GM12878 (cell line): ENCODE measurements at regions of chr5 and their contacts with region 1.

Region 1: DNA sequence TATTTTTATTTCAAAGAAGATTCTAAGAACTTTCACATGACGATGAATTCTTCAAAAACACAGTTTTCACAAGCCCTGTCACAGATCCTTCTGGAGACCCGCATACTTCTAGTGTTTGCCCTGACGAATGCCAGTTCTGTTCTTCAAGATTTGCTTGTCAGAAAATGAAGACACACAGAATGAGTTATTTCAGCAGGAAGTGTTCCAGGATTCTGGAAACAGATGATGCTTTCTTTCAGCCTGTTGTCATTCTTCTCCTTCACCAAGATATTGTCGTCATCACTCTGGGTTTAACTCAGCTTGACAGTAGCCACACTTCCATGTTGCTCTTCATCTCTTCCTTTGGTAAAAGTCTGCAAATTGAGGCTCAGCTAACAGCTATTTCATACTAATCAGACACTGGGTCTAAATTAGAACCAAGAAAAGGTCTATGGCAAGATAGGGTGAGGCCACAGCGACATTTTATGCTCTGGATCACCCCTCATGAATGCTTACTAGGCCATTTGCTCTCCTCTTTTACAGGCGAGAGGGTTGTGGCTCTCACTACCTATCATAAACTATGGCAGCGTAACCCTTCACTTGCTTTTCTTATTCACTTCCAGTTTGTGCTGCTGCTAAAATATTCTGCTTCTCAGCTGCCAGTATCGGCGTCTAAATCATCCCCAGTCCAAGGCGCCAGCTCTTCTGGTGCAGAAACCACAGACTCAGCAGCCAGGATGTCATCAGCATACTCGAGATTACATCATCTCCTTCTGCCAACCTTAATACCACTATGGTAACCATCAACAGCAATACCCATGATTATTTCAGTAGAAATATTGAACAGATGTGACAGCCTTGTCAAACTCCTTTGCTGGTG is 159.6 kb upstream of the TBCA start:
- DNase-seq: peak; percentile 44
- ATAC-seq: peak; percentile 86
- H3K4me3 ChIP-seq: no peak overlapping the region
- H3K27ac ChIP-seq: peak overlapping the region; percentile 86
- H3K4me1 ChIP-seq: peaks cover 28% of the 10 kb centered on the region
- H3K27me3 ChIP-seq: no peaks in the 10 kb centered on the region
- CTCF ChIP-seq: no peak
- EP300 ChIP-seq: no peak
- POLR2A ChIP-seq: no peak
- RAD21 ChIP-seq: no peak

Region 2: DNA sequence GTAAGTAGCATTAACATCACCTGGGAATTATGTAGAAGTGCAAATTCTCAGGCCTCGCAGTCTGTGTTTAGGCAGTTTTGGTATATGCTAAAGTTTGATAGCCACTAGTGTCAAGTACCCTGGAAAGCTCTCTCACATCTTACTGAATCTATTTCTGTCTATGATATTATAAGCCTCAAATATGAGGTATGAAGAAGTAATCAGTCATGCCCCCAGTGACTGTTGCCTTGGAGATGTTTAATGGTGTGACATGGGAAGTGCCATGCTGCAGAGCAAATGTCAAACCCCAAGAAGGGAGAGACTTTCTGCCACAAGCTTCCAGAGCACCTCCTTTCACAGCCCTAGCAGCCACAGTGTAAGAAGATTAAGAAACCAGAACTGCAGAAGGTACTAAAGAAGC is 735.1 kb before region 1 on chr5:
- CTCF ChIA-PET with region 1: no interaction called
- POLR2A ChIA-PET with region 1: no interaction called
- RAD21 ChIA-PET with region 1: no interaction called
- SMC1A ChIA-PET with region 1: no interaction called
- in situ Hi-C with region 1: no loop called
- intact Hi-C with region 1: no loop called
- DNase-seq: no peak
- ATAC-seq: no peak
- H3K4me3 ChIP-seq: no peak overlapping the region
- H3K27ac ChIP-seq: no peak overlapping the region
- H3K4me1 ChIP-seq: no peaks in the 10 kb centered on the region
- H3K27me3 ChIP-seq: no peaks in the 10 kb centered on the region
- CTCF ChIP-seq: no peak
- EP300 ChIP-seq: no peak
- POLR2A ChIP-seq: no peak
- RAD21 ChIP-seq: no peak

Region 3: DNA sequence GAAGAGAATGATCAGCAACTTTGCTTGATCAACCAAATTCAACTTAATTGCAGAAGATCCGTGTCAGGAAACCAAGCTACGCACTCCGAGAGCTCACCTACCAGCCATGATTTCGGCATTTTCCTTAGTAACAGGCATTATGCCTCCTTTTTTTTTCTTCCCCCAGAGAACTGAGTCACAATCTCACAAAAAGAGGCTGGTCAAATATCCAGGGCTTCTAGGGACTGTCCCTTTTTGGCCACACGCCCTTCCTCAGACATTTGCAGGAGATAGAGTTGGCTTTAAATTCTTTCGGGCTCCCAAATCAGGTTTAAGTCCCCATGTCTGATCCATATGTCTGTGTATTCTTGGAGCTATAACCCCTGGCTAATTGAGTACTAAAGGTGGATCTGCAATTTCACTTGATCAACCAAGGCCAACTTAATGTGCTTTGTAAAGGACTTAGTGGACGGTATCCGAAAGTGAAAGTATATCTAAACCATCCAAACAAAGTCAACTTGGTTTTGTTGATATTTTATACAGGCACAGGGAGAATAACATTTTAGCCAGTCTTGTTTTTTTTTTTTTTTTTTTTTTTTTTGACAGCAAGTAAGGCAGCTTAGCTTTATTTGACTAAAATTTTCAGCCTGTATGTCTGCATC is 58.8 kb before region 1 on chr5:
- CTCF ChIA-PET with region 1: interaction called, 5 read pairs
- POLR2A ChIA-PET with region 1: interaction called, 12 read pairs
- RAD21 ChIA-PET with region 1: interaction called, 68 read pairs
- SMC1A ChIA-PET with region 1: interaction called, 81 read pairs
- in situ Hi-C with region 1: no loop called
- intact Hi-C with region 1: loop called (anchors 2 kb)
- DNase-seq: no peak
- ATAC-seq: no peak
- H3K4me3 ChIP-seq: no peak overlapping the region
- H3K27ac ChIP-seq: no peak overlapping the region
- H3K4me1 ChIP-seq: peaks cover 23% of the 10 kb centered on the region
- H3K27me3 ChIP-seq: no peaks in the 10 kb centered on the region
- CTCF ChIP-seq: no peak
- EP300 ChIP-seq: no peak
- POLR2A ChIP-seq: no peak
- RAD21 ChIP-seq: no peak

Region 4: DNA sequence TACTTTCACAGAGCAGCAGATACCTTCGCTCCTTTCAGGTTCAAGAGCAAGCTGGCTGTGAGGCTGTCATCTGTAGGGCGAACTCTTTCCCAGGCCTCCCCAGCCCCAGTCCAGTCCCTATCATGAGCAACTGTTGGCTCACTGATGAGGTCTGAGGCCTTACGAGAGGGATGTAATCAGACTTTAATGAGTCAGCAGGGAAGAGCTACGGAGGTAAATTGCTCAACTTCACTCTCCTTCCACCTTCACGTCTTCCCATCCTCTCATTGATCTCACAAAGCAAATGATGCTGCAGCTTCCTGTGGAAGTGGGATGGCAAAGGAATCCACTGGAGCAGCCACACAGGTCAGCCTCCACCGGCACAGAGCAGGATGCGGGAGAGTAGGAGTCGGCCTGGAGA is 28.9 kb before region 1 on chr5:
- CTCF ChIA-PET with region 1: interaction called, 3 read pairs
- POLR2A ChIA-PET with region 1: no interaction called
- RAD21 ChIA-PET with region 1: interaction called, 3 read pairs
- SMC1A ChIA-PET with region 1: interaction called, 12 read pairs
- in situ Hi-C with region 1: no loop called
- intact Hi-C with region 1: no loop called
- DNase-seq: no peak
- ATAC-seq: no peak
- H3K4me3 ChIP-seq: no peak overlapping the region
- H3K27ac ChIP-seq: no peak overlapping the region
- H3K4me1 ChIP-seq: no peaks in the 10 kb centered on the region
- H3K27me3 ChIP-seq: no peaks in the 10 kb centered on the region
- CTCF ChIP-seq: no peak
- EP300 ChIP-seq: no peak
- POLR2A ChIP-seq: no peak
- RAD21 ChIP-seq: no peak

Region 5: DNA sequence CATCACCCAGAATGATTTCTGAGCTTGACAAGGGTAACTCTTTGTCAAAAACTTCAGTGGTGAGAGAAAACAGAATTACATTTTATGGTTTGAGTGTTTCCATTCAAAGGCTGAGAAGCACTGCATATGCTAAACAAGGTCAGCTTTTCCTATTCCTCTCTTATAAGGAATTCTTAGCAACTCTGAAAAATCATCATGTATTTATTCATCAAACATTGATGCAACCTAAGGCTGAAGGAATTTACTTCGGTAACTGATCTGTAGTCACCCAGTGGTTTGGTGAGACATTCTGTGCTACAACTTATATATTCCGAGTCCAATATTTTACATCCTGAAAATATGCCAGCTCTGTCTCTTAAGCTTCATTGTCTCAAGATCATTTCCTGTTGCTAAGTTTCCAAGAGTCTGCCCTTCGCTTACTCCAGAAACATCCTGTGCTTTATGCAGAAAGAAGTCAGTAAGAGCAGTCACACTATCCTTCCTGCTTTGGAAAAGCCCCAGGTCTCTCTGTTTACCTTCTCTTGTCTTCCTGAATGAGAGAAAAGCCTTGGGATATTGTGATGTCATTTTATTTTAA is 17.0 kb after region 1 on chr5:
- CTCF ChIA-PET with region 1: interaction called, 5 read pairs
- POLR2A ChIA-PET with region 1: interaction called, 8 read pairs
- RAD21 ChIA-PET with region 1: interaction called, 3 read pairs
- SMC1A ChIA-PET with region 1: interaction called, 19 read pairs
- in situ Hi-C with region 1: no loop called
- intact Hi-C with region 1: no loop called
- DNase-seq: no peak
- ATAC-seq: no peak
- H3K4me3 ChIP-seq: no peak overlapping the region
- H3K27ac ChIP-seq: no peak overlapping the region
- H3K4me1 ChIP-seq: no peaks in the 10 kb centered on the region
- H3K27me3 ChIP-seq: no peaks in the 10 kb centered on the region
- CTCF ChIP-seq: no peak
- EP300 ChIP-seq: no peak
- POLR2A ChIP-seq: no peak
- RAD21 ChIP-seq: no peak

Region 6: DNA sequence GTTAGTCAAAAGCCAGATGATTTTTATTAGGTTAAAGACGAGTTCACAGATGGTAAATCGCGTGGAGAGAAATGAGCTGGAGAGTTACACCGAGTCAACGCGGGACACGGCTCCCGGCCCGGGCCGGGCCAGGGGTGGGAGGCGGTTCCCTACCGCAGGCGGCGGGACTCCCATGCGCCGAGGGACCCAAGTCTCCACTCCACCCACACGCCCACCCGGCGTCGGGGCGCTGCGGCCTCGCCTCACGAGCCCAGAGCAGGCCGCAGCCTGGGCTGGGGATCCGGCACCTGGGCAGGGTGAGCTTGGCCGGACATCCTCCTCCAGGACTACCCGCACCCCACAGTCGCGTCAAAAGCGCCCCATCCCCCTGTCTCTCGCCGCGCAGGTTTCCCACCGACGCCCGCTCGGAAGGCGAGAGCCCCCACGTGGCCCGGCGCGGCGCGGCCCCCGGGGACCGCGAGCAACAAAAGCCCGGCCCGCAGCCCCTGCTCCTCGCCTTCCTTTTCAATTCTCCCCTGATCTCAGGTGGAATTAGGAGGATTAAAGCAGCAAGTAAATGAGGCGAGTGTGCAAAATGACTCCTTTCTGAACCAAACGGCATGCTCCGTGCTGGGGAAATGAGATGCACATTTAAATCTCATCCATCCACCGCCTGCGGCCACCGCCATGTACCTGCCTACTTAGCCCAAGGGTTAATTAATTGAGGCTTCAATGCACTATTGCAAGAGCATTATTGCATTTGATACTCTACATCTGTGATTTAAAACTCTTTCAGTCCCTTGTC is 36.9 kb after region 1 on chr5:
- CTCF ChIA-PET with region 1: interaction called, 11 read pairs
- POLR2A ChIA-PET with region 1: interaction called, 4 read pairs
- RAD21 ChIA-PET with region 1: interaction called, 10 read pairs
- SMC1A ChIA-PET with region 1: interaction called, 23 read pairs
- in situ Hi-C with region 1: no loop called
- intact Hi-C with region 1: no loop called
- DNase-seq: no peak
- ATAC-seq: peak; percentile 91
- H3K4me3 ChIP-seq: peak overlapping the region; percentile 61
- H3K27ac ChIP-seq: no peak overlapping the region
- H3K4me1 ChIP-seq: peaks cover 8% of the 10 kb centered on the region
- H3K27me3 ChIP-seq: 0 out of 4 replicates have a peak, but pooled peaks cover 0 to 4% of the 10 kb centered on the region in 2 experiments
- CTCF ChIP-seq: peak; percentile 50 to 53 (median 51); a peak in 5 of 6 replicates
- EP300 ChIP-seq: no peak
- POLR2A ChIP-seq: no peak
- RAD21 ChIP-seq: peak; percentile 76